ENCODE measurements at regions of chr14 and their contacts with region 1.

Region 1: DNA sequence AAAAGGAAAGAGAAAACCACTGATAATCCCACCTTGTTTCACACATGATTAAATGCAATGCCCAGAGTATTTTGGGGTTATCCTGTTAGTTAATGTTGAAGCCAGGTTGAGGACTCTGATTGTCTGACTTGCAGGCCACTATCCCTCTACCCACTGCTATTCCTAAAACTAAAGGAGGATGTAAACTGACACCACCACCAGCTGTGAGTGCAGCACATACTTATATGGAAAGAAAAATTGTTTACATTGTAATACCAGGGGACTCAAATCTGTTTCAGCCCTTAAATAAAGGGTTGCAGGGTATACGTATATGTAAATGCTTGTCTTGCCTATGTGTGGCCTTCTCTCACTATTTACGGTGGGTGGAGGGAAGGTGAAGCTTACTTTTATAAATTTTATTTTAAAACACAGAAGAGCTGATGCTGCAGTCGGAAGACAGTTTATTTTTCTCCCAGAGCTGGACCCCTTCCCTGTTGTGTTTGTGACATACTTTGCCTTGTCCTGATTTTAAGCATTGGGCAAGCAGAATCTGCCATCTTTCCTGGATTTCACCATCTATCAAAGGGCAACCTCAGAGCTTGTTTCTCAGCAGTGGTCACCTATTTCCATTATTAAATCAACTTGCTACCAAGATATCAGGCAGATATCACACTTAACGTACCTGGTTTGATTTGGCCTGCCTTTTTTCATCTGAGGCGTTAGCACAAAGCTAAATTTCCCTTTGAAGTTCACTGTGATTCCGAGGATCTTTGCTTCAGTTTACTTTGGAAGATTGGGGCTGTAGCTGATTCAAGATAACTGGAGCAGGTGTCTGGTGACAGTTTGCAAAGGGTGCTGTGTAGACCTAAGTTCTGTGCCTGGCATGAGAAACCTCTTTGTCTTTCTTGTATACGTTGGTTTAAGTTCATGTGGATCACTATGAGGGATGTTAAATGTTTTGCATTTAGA is 25.2 kb downstream of the DAAM1 start:
- DNase-seq: peak; percentile 72
- ATAC-seq: peak; percentile 76
- H3K4me3 ChIP-seq: no peak overlapping the region
- H3K27ac ChIP-seq: 0 out of 2 replicates have a peak overlapping the region, but pooled peaks have one; percentile 15
- H3K4me1 ChIP-seq: peaks cover 11% of the 10 kb centered on the region
- H3K27me3 ChIP-seq: no peaks in the 10 kb centered on the region
- CTCF ChIP-seq: no peak
- POLR2A ChIP-seq: no peak
- RAD21 ChIP-seq: no peak

Region 2: DNA sequence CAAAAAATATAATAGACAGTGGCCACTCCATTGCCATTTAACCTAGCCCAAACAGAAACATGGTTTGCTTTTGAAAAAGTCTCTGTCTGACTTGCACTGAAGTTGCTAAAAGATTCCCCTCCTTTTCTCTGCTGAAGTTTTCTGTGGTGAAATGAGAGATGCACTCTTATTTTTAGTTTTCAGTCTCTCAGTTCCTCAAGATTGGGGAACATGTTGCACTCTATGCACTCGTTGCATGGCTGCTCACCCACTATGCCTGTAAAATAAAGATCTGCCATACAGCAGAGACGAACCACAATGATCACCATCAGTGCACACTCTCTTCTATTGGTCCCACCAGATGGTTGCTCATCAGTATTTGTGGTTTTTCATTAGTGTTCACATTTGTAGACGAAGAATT is 38.2 kb before region 1 on chr14:
- CTCF ChIA-PET with region 1: no interaction called
- POLR2A ChIA-PET with region 1: no interaction called
- dilution Hi-C with region 1: no loop called
- in situ Hi-C with region 1: no loop called
- intact Hi-C with region 1: loop called (anchors 2 kb)
- DNase-seq: no peak
- ATAC-seq: no peak
- H3K4me3 ChIP-seq: no peak overlapping the region
- H3K27ac ChIP-seq: no peak overlapping the region
- H3K4me1 ChIP-seq: no peaks in the 10 kb centered on the region; the same call in 1 of the 2 replicates
- H3K27me3 ChIP-seq: peaks cover 22% of the 10 kb centered on the region
- CTCF ChIP-seq: no peak
- POLR2A ChIP-seq: no peak
- RAD21 ChIP-seq: no peak

Region 3: GRCh38 chr14:59195912-59196311 is 17.7 kb before region 1 on chr14:
- CTCF ChIA-PET with region 1: no interaction called
- POLR2A ChIA-PET with region 1: no interaction called
- dilution Hi-C with region 1: no loop called
- in situ Hi-C with region 1: no loop called
- intact Hi-C with region 1: no loop called
- DNase-seq: no peak
- ATAC-seq: no peak
- H3K4me3 ChIP-seq: no peak overlapping the region
- H3K27ac ChIP-seq: no peak overlapping the region
- H3K4me1 ChIP-seq: peaks cover 4% of the 10 kb centered on the region; the same call in 1 of the 2 replicates
- H3K27me3 ChIP-seq: no peaks in the 10 kb centered on the region
- CTCF ChIP-seq: no peak
- POLR2A ChIP-seq: no peak
- RAD21 ChIP-seq: no peak

Region 4: DNA sequence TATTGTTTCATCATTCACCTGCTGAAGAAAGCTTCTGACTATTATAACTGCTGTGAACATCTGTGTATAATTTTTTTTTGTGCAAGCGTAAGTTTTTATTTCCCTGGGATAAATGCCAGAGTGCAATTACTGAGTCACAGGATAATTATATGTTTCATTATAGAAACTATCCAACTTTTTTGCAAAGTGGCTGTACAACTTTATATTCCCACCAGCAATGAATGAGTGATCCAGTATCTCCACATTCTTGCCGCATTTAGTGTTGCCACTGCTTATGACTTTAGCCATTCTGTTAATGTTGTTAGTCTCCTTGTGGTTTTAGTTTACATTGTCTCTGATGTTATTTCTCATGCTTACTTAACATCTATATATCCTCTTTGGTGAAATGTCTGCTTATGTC is 451.1 kb after region 1 on chr14:
- CTCF ChIA-PET with region 1: no interaction called
- POLR2A ChIA-PET with region 1: interaction called, 13 read pairs
- dilution Hi-C with region 1: no loop called
- in situ Hi-C with region 1: no loop called
- intact Hi-C with region 1: no loop called
- DNase-seq: no peak
- ATAC-seq: no peak
- H3K4me3 ChIP-seq: no peak overlapping the region
- H3K27ac ChIP-seq: no peak overlapping the region
- H3K4me1 ChIP-seq: no peaks in the 10 kb centered on the region
- H3K27me3 ChIP-seq: no peaks in the 10 kb centered on the region
- CTCF ChIP-seq: no peak
- POLR2A ChIP-seq: no peak
- RAD21 ChIP-seq: no peak

Region 5: GRCh38 chr14:59679872-59680271 is 466.2 kb after region 1 on chr14:
- CTCF ChIA-PET with region 1: no interaction called
- POLR2A ChIA-PET with region 1: no interaction called
- dilution Hi-C with region 1: no loop called
- in situ Hi-C with region 1: no loop called
- intact Hi-C with region 1: no loop called
- DNase-seq: no peak
- ATAC-seq: no peak
- H3K4me3 ChIP-seq: no peak overlapping the region
- H3K27ac ChIP-seq: no peak overlapping the region
- H3K4me1 ChIP-seq: no peaks in the 10 kb centered on the region
- H3K27me3 ChIP-seq: no peaks in the 10 kb centered on the region
- CTCF ChIP-seq: no peak
- POLR2A ChIP-seq: no peak
- RAD21 ChIP-seq: no peak